Activated T-helper 1 cell treated with anti-CD3 and anti-CD28 coated beads, Interleukin-12 subunit alpha, Interleukin-12 subunit beta, Interleukin-2, Interleukin-4 antibody, amounts not matched to agents 30 ng/mL and 10 ng/mL and 1 ng/mL, durations not matched to agents 14 hours and 24 hours and 36 hours (primary cell): ENCODE measurements at regions of chr2 and their contacts with region 1.

Region 1: GRCh38 chr2:231297108-231297908 is 98.2 kb upstream of the B3GNT7 start:
- DNase-seq: peak; percentile 9
- H3K4me3 Mint-ChIP-seq: no peak overlapping the region
- H3K27ac Mint-ChIP-seq: no peak overlapping the region
- H3K4me1 Mint-ChIP-seq: no peaks in the 10 kb centered on the region
- H3K27me3 Mint-ChIP-seq: peaks cover 5% of the 10 kb centered on the region

Region 2: DNA sequence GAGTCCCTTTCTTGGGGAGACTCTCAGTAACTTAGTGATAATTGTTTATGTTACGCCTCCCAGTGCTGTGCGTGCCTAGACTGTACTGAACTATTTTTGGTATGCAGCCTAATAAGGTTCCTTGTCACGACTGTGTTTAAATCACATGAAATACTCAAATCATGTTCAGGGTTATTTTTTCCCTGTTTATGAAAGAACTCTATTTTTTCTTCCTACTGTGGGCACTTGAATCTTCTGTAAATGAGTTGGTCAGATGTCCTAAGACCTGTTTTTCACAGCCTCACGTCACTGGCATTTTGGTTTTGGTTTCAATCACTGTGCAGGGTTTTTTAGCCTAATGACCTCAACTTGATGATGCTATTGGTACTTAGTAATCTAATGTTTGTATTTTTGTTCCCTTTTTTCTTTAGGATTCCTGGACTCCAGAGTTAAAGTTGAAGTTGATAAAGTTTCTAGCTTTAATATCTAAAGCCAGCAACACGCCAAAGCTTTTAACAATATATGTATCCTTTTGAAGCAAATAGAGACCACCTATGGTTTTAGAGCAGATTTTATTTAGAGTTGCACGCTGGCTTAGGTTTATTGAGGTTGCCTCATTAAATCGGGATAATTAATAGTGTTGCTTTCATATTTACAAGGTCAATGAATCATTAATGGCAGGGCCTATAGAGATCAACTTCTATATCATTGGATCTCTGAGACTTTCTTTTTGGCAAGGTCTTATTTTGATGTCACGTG is 74.8 kb before region 1 on chr2:
- intact Hi-C with region 1: no loop called
- DNase-seq: no peak
- H3K4me3 Mint-ChIP-seq: no peak overlapping the region
- H3K27ac Mint-ChIP-seq: no peak overlapping the region
- H3K4me1 Mint-ChIP-seq: no peaks in the 10 kb centered on the region
- H3K27me3 Mint-ChIP-seq: peaks cover 2% of the 10 kb centered on the region

Region 3: GRCh38 chr2:231399853-231400680 is 102.8 kb after region 1 on chr2:
- intact Hi-C with region 1: loop called (anchors 2 kb)
- DNase-seq: no peak
- H3K4me3 Mint-ChIP-seq: no peak overlapping the region
- H3K27ac Mint-ChIP-seq: no peak overlapping the region
- H3K4me1 Mint-ChIP-seq: peaks cover 1% of the 10 kb centered on the region
- H3K27me3 Mint-ChIP-seq: peaks cover 21% of the 10 kb centered on the region

Region 4: GRCh38 chr2:231411831-231412617 is 114.7 kb after region 1 on chr2:
- intact Hi-C with region 1: loop called (anchors 1 kb)
- DNase-seq: peak; percentile 26
- H3K4me3 Mint-ChIP-seq: peak overlapping the region; percentile 20
- H3K27ac Mint-ChIP-seq: no peak overlapping the region
- H3K4me1 Mint-ChIP-seq: peaks cover 2% of the 10 kb centered on the region
- H3K27me3 Mint-ChIP-seq: peaks cover 34% of the 10 kb centered on the region

Region 5: GRCh38 chr2:231452799-231453508 is 155.6 kb after region 1 on chr2:
- intact Hi-C with region 1: loop called (anchors 1 kb)
- DNase-seq: no peak
- H3K4me3 Mint-ChIP-seq: no peak overlapping the region
- H3K27ac Mint-ChIP-seq: peak overlapping the region; percentile 52
- H3K4me1 Mint-ChIP-seq: peaks cover 17% of the 10 kb centered on the region
- H3K27me3 Mint-ChIP-seq: no peaks in the 10 kb centered on the region

Region 6: GRCh38 chr2:231854671-231855070 is 557.4 kb after region 1 on chr2:
- intact Hi-C with region 1: no loop called
- DNase-seq: no peak
- H3K4me3 Mint-ChIP-seq: no peak overlapping the region
- H3K27ac Mint-ChIP-seq: no peak overlapping the region
- H3K4me1 Mint-ChIP-seq: no peaks in the 10 kb centered on the region
- H3K27me3 Mint-ChIP-seq: peaks cover 1% of the 10 kb centered on the region